ENCODE measurements at regions of chr19 and their contacts with region 1.

Region 1: GRCh38 chr19:9584073-9584833 is at the start of gene ZNF121:
- DNase-seq: peak; percentile 83 to 89
- ATAC-seq: peak; percentile 88 to 89 (median 89)
- H3K4me3 ChIP-seq: peak within 1 kb of the TSS; percentile 95
- H3K4me3 Mint-ChIP-seq: peak within 1 kb of the TSS; percentile 96
- H3K27ac ChIP-seq: peak within 1 kb of the TSS; percentile 94
- H3K27ac Mint-ChIP-seq: peak within 1 kb of the TSS; percentile 97
- H3K4me1 ChIP-seq: peaks cover 27% of the 10 kb centered on the region
- H3K4me1 Mint-ChIP-seq: peaks cover 41 to 44% of the 10 kb centered on the region in 2 donors
- H3K27me3 ChIP-seq: no peaks in the 10 kb centered on the region
- H3K27me3 Mint-ChIP-seq: peaks cover 9 to 19% of the 10 kb centered on the region in 2 donors
- CTCF ChIP-seq: no peak
- total RNA-seq, gene ZNF121: 32.9 to 35.7 (median 33.1) TPM

Region 2: GRCh38 chr19:9538183-9539058 is 45.8 kb before region 1 on chr19 and contains the start of gene ZNF426:
- intact Hi-C with region 1: loop called (anchors 1 kb)
- DNase-seq: peak; percentile 86 to 91
- ATAC-seq: peak; percentile 93 to 95 (median 95)
- H3K4me3 ChIP-seq: peak within 1 kb of the TSS; percentile 97
- H3K4me3 Mint-ChIP-seq: peak within 1 kb of the TSS; percentile 94
- H3K27ac ChIP-seq: peak within 1 kb of the TSS; percentile 91
- H3K27ac Mint-ChIP-seq: peak within 1 kb of the TSS; percentile 97 to 99
- H3K4me1 ChIP-seq: peaks cover 17% of the 10 kb centered on the region
- H3K4me1 Mint-ChIP-seq: peaks cover 17 to 33% of the 10 kb centered on the region in 2 donors
- H3K27me3 ChIP-seq: no peaks in the 10 kb centered on the region
- H3K27me3 Mint-ChIP-seq: peaks cover 0 to 2% of the 10 kb centered on the region in 2 donors
- CTCF ChIP-seq: no peak
- total RNA-seq, gene ZNF426: 14.1 to 17.3 (median 14.4) TPM

Region 3: GRCh38 chr19:9645472-9645871 is 61.2 kb after region 1 on chr19:
- intact Hi-C with region 1: no loop called
- DNase-seq: peak in 1 of 2 donors; percentile 27
- ATAC-seq: peak in 1 of 3 donors; percentile 40
- H3K4me3 ChIP-seq: no peak overlapping the region
- H3K4me3 Mint-ChIP-seq: no peak overlapping the region
- H3K27ac ChIP-seq: no peak overlapping the region
- H3K27ac Mint-ChIP-seq: peak overlapping the region in 1 of 2 donors; percentile 46
- H3K4me1 ChIP-seq: peaks cover 3% of the 10 kb centered on the region
- H3K4me1 Mint-ChIP-seq: peaks cover 17 to 24% of the 10 kb centered on the region in 2 donors
- H3K27me3 ChIP-seq: no peaks in the 10 kb centered on the region
- H3K27me3 Mint-ChIP-seq: no peaks in the 10 kb centered on the region
- CTCF ChIP-seq: no peak